ENCODE measurements at regions of chr15 and their contacts with region 1.

Region 1: GRCh38 chr15:94163999-94164807 is 67.2 kb upstream of the MCTP2 start:
- DNase-seq: no peak
- ATAC-seq: peak; percentile 82
- H3K4me3 ChIP-seq: no peak overlapping the region
- H3K27ac ChIP-seq: no peak overlapping the region
- H3K4me1 ChIP-seq: no peaks in the 10 kb centered on the region
- H3K27me3 ChIP-seq: no peaks in the 10 kb centered on the region
- CTCF ChIP-seq: peak; percentile 69 to 83 (median 80)
- EP300 ChIP-seq: no peak
- POLR2A ChIP-seq: no peak
- RAD21 ChIP-seq: peak; percentile 97

Region 2: GRCh38 chr15:94174399-94174802 is 10.2 kb after region 1 on chr15:
- CTCF ChIA-PET with region 1: interaction called, 13 read pairs
- POLR2A ChIA-PET with region 1: no interaction called
- RAD21 ChIA-PET with region 1: interaction called, 4 read pairs
- SMC1A ChIA-PET with region 1: interaction called, 12 read pairs
- in situ Hi-C with region 1: no loop called
- intact Hi-C with region 1: no loop called
- DNase-seq: peak; percentile 30
- ATAC-seq: peak; percentile 95
- H3K4me3 ChIP-seq: no peak overlapping the region
- H3K27ac ChIP-seq: no peak overlapping the region
- H3K4me1 ChIP-seq: no peaks in the 10 kb centered on the region
- H3K27me3 ChIP-seq: no peaks in the 10 kb centered on the region
- CTCF ChIP-seq: no peak
- EP300 ChIP-seq: 0 out of 4 replicates have a peak, but pooled peaks have one; percentile 27 to 38
- POLR2A ChIP-seq: no peak
- RAD21 ChIP-seq: no peak

Region 3: DNA sequence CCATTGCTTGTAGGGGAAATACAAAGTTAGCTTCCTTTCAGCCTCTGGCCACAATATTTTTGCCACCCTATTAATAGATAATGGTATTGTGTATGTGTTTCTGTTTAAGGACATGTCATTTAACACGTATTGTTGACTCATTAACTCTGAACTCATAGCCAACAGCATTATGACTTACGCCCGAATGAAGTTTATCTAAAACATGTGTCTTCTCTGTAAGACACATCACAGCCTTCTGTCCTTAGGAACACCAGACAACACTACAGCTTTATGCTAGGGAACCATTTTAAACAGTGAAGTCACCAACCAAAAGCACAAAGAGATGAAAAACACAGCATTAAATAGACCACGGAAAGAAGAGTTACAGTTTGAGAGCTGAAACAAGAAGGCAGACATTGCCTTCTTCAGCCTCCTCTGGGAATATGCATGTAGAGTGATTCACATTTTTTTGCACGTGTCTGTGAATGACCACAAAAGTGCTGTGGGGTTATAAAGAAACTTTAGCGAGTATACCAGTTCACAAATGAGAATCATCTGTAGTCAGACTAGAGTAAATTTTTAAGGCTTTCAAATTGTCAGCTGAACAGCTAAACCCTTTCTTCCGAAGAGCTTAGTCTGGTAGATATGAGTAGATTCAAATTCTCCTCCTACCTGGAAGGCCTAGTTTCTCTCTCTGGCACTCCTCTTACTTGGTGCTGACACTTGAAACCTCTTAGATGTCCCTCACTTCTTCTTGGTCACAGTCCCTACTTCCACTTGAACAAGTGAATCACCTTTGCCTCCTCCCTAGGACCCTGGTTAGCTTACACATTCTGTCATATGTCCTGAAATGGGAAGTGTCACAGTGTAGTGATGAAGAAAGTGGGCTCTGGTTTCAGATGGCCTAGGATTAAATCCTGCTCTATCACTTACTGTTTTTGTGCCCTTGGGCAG is 99.4 kb after region 1 on chr15:
- CTCF ChIA-PET with region 1: interaction called, 12 read pairs
- POLR2A ChIA-PET with region 1: no interaction called
- RAD21 ChIA-PET with region 1: interaction called, 3 read pairs
- SMC1A ChIA-PET with region 1: interaction called, 4 read pairs
- in situ Hi-C with region 1: no loop called
- intact Hi-C with region 1: no loop called
- DNase-seq: peak; percentile 73
- ATAC-seq: peak; percentile 78
- H3K4me3 ChIP-seq: no peak overlapping the region
- H3K27ac ChIP-seq: no peak overlapping the region
- H3K4me1 ChIP-seq: peaks cover 2% of the 10 kb centered on the region; the same call in 1 of the 2 replicates
- H3K27me3 ChIP-seq: no peaks in the 10 kb centered on the region
- CTCF ChIP-seq: no peak
- EP300 ChIP-seq: peak; percentile 45 to 55; a peak in 2 of 4 replicates
- POLR2A ChIP-seq: no peak
- RAD21 ChIP-seq: no peak

Region 4: GRCh38 chr15:94306700-94307650 is 142.8 kb after region 1 on chr15:
- CTCF ChIA-PET with region 1: interaction called, 11 read pairs
- POLR2A ChIA-PET with region 1: no interaction called
- RAD21 ChIA-PET with region 1: interaction called, 9 read pairs
- SMC1A ChIA-PET with region 1: interaction called, 6 read pairs
- in situ Hi-C with region 1: no loop called
- intact Hi-C with region 1: no loop called
- DNase-seq: peak; percentile 78
- ATAC-seq: peak; percentile 91
- H3K4me3 ChIP-seq: no peak overlapping the region
- H3K27ac ChIP-seq: no peak overlapping the region
- H3K4me1 ChIP-seq: peaks cover 13% of the 10 kb centered on the region
- H3K27me3 ChIP-seq: no peaks in the 10 kb centered on the region
- CTCF ChIP-seq: no peak
- EP300 ChIP-seq: peak; percentile 94 to 96
- POLR2A ChIP-seq: no peak
- RAD21 ChIP-seq: no peak

Region 5: GRCh38 chr15:94346282-94346681 is 182.1 kb after region 1 on chr15:
- CTCF ChIA-PET with region 1: interaction called, 8 read pairs
- POLR2A ChIA-PET with region 1: no interaction called
- RAD21 ChIA-PET with region 1: interaction called, 4 read pairs
- SMC1A ChIA-PET with region 1: interaction called, 12 read pairs
- in situ Hi-C with region 1: no loop called
- intact Hi-C with region 1: no loop called
- DNase-seq: no peak
- ATAC-seq: no peak
- H3K4me3 ChIP-seq: no peak overlapping the region
- H3K27ac ChIP-seq: no peak overlapping the region
- H3K4me1 ChIP-seq: no peaks in the 10 kb centered on the region
- H3K27me3 ChIP-seq: no peaks in the 10 kb centered on the region
- CTCF ChIP-seq: no peak
- EP300 ChIP-seq: no peak
- POLR2A ChIP-seq: no peak
- RAD21 ChIP-seq: no peak

Measured in GM12878 (cell line).